Posterior vena cava (tissue), 2 donors: ENCODE measurements at regions of chr2 and their contacts with region 1.

Region 1: GRCh38 chr2:174977360-174977759 is 27.8 kb downstream of the CHN1 start:
- DNase-seq: no peak

Region 2: DNA sequence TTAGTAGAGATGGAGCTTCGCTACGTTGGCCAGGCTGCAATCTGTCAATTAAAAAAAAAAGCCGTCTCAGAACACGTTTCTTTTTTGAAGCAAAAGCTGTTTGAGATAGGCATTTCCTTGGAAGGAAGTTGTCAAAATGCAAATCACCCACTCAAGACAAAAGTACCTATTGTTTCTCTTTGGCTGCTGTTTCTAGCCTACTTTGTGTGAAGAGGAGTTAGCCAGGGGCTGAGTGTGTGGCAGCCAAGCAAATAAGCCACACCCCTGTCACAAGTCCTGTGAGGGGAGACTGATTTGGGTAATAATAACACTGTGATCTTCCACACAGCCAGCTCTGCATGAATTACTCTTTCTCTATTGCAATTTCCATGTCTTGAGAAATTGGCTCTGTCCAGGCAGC is 1670.1 kb before region 1 on chr2:
- intact Hi-C with region 1: loop called in 1 of 2 experiments (anchors 5 kb)
- DNase-seq: no peak